IMR-90 (cell line): ENCODE measurements at regions of chr6 and their contacts with region 1.

Region 1: DNA sequence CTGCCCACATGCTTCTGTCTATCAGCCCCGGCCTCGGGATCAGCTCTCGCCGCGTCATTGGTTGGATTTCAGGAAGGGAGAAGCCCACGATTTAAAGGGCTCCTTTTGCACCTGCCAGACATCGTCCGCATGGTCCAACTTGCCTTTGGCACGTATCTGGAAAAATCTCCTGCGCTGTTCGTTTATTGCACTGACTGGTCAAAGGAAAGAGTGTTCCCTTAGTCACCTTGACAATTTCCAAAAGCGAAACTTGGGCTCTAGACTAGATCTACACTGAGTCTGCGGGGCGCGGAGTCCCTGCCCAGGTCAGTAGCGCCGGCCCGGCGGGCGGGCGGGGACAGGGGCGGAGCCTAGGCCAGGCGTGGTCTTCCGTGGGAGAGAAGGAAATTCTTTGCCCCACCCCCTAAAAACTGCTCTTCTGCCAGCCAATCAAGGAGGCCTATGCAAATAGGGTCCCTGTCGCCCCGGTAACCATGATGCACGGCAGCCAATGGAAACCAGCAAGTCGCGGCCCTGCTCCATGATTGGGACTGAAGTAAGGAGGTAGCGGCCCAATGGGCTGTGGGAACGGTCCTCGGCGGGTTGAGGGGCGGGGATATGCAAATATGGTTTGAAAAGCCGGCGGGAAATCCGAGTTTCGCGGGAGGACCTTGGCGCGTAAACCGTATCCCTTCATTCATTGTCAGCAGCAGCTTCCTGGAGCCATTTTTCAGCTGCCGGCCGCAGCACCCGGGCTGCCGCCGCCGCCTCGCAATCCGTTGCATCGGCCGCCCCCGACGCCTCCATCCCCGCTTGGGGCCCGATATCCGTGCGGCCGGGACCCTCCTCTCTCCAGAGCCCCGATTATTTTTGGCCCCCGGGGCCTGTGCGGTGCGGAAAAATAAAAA is at the start of gene E2F3:
- DNase-seq: peak; percentile 100
- ATAC-seq: peak; percentile 83
- H3K4me3 ChIP-seq: peak within 1 kb of the TSS; percentile 86
- H3K27ac ChIP-seq: peak within 1 kb of the TSS; percentile 84
- H3K4me1 ChIP-seq: no peaks in the 10 kb centered on the region
- H3K27me3 ChIP-seq: no peaks in the 10 kb centered on the region
- CTCF ChIP-seq: no peak
- POLR2A ChIP-seq: peak; percentile 83
- RAD21 ChIP-seq: no peak
- total RNA-seq, gene E2F3: 2.3 and 3.3 TPM in 2 replicates

Region 2: DNA sequence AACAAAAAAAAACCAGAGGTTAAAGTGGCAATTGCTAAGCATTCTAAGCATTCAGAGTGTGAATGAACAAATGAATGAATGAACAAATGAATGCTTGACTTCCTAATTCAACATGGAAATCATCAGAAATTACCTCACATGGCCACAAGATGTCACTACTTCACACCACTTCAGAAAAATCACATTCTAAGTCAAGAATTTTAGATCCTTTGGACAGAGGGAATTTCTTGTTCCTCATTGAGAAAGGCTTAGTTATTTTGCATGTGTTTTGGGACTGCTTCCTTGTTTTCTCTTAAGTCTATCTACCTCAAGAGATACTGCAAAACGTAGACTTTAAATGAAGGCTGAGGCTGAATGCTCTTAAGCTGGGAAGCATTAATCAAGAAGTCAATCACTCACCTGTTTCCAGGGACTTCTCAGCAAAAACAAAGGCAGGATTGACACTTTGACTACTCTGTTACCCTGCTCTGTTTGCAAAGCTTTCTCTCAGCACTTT is 309.3 kb before region 1 on chr6:
- CTCF ChIA-PET with region 1: no interaction called
- POLR2A ChIA-PET with region 1: no interaction called
- dilution Hi-C with region 1: no loop called
- in situ Hi-C with region 1: no loop called
- intact Hi-C with region 1: loop called (anchors 5 kb)
- DNase-seq: peak; percentile 59
- ATAC-seq: peak; percentile 70
- H3K4me3 ChIP-seq: no peak overlapping the region
- H3K27ac ChIP-seq: no peak overlapping the region
- H3K4me1 ChIP-seq: no peaks in the 10 kb centered on the region
- H3K27me3 ChIP-seq: no peaks in the 10 kb centered on the region
- CTCF ChIP-seq: peak; percentile 69
- POLR2A ChIP-seq: no peak
- RAD21 ChIP-seq: peak; percentile 72

Region 3: GRCh38 chr6:20212392-20213217 is 188.8 kb before region 1 on chr6 and contains the start of gene MBOAT1:
- CTCF ChIA-PET with region 1: no interaction called
- POLR2A ChIA-PET with region 1: no interaction called
- dilution Hi-C with region 1: no loop called
- in situ Hi-C with region 1: no loop called
- intact Hi-C with region 1: loop called (anchors 2 kb)
- DNase-seq: peak; percentile 87
- ATAC-seq: peak; percentile 99
- H3K4me3 ChIP-seq: peak within 1 kb of the TSS; percentile 93
- H3K27ac ChIP-seq: peak within 1 kb of the TSS; percentile 65
- H3K4me1 ChIP-seq: peaks cover 6% of the 10 kb centered on the region; the same call in 1 of the 2 replicates
- H3K27me3 ChIP-seq: no peaks in the 10 kb centered on the region
- CTCF ChIP-seq: no peak; the same call in 1 of the 2 replicates
- POLR2A ChIP-seq: peak; percentile 48; the same call in 1 of the 2 replicates
- RAD21 ChIP-seq: no peak
- total RNA-seq, gene MBOAT1: 4.7 and 5.6 TPM in 2 replicates

Region 4: DNA sequence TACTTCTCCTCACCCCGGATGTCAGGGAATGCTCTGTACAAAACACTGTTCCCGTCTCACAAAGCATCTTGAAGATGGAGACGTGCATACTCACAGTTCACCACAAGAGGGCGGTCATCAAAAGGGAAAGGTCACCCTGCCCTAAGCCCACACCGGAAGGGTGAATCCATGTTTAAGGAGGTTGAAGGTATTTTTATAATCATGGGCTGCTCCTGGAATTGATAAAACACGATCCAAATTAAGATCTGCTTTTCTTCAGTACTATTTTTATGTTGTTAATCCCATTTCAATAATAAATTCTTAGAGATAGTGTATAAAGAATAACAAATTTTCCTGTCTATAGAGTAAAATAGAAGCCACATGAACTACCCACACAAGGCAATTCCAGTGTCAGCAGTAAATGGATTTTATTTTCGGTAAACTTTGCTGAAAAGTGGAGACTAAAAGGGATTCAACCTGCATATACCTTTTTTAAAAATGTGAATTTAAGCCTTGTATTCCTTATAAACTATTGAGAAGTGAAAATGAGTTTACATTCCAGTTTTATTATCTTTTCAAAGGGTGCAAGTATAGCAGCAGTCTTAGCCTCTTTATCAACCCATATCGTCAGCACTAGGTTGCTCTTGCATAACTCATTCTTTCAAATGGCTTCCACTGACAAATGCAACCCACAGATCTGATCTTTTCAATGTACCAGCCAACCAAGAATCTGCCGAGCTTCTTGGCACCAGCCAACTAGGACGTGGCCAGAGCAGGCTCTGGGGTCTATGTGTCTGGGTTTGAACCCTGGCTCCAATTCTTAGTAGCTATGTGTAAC is 109.5 kb before region 1 on chr6:
- CTCF ChIA-PET with region 1: interaction called, 5 read pairs
- POLR2A ChIA-PET with region 1: no interaction called
- dilution Hi-C with region 1: no loop called
- in situ Hi-C with region 1: no loop called
- intact Hi-C with region 1: loop called (anchors 1 kb)
- DNase-seq: peak; percentile 82
- ATAC-seq: peak; percentile 99
- H3K4me3 ChIP-seq: no peak overlapping the region
- H3K27ac ChIP-seq: no peak overlapping the region
- H3K4me1 ChIP-seq: no peaks in the 10 kb centered on the region
- H3K27me3 ChIP-seq: no peaks in the 10 kb centered on the region
- CTCF ChIP-seq: peak; percentile 87
- POLR2A ChIP-seq: peak; percentile 46; the same call in 1 of the 2 replicates
- RAD21 ChIP-seq: peak; percentile 93

Region 5: GRCh38 chr6:20534295-20535262 is 133.1 kb after region 1 on chr6 and contains the start of gene CDKAL1:
- CTCF ChIA-PET with region 1: interaction called, 4 read pairs
- POLR2A ChIA-PET with region 1: interaction called, 10 read pairs
- dilution Hi-C with region 1: no loop called
- in situ Hi-C with region 1: loop called (anchors 10 kb)
- intact Hi-C with region 1: no loop called
- DNase-seq: peak; percentile 93
- ATAC-seq: peak; percentile 95
- H3K4me3 ChIP-seq: peak within 1 kb of the TSS; percentile 73
- H3K27ac ChIP-seq: peak within 1 kb of the TSS; percentile 92
- H3K4me1 ChIP-seq: 0 out of 2 replicates have a peak, but pooled peaks cover 1% of the 10 kb centered on the region
- H3K27me3 ChIP-seq: no peaks in the 10 kb centered on the region
- CTCF ChIP-seq: no peak
- POLR2A ChIP-seq: peak; percentile 80
- RAD21 ChIP-seq: no peak
- total RNA-seq, gene CDKAL1: 13.1 and 17.5 TPM in 2 replicates

Region 6: GRCh38 chr6:20811109-20811746 is 409.8 kb after region 1 on chr6:
- CTCF ChIA-PET with region 1: no interaction called
- POLR2A ChIA-PET with region 1: no interaction called
- dilution Hi-C with region 1: no loop called
- in situ Hi-C with region 1: no loop called
- intact Hi-C with region 1: loop called (anchors 5 kb)
- DNase-seq: peak; percentile 99
- ATAC-seq: peak; percentile 92
- H3K4me3 ChIP-seq: no peak overlapping the region
- H3K27ac ChIP-seq: peak overlapping the region; percentile 87; the same call in 1 of the 2 replicates
- H3K4me1 ChIP-seq: peaks cover 6% of the 10 kb centered on the region
- H3K27me3 ChIP-seq: no peaks in the 10 kb centered on the region
- CTCF ChIP-seq: no peak
- POLR2A ChIP-seq: no peak
- RAD21 ChIP-seq: no peak